ENCODE measurements at regions of chr4 and their contacts with region 1.

Region 1: DNA sequence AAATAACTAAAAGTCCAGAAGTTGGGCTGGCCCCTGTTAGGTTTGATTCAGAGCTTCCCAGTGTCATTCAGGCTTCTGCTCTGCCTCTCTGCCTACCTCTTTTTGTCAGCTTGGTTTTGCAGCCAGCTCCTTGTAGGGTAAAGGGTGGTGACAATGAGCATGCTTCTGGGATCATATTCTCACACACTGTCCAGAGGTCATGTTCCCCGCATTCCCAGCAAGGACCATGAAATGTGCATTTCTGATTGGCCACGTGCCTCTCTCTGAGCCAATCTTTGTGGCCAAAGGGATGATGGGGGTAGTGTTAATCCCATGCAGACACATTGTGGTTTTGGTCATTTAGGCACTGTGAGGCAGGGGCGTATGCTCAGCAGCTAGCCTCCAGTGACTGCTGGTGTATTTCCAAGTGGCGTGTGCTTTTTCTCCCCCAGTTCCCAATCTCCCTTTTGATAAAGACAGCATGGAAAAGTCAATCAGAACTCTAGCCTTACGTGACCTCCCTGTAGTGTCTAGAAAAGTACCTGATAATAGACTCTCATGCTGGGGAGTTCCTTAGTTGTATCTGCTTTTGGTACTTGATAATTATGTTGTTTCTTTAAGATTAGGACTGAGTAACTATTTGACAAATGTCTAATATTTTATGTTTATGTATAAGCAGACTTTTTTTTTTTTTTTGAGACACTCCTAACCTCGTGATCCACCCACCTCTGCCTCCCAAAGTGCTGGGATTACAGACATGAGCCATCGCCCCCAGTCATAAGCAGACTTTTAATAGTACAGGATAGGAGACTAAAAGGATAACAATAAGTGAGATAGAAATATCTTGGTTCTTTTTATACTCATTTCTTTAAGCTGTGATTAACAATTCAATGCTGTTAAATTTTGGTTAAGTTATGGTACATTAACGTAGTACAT is 57.8 kb downstream of the KIAA0232 start:
- DNase-seq: peak; percentile 22 to 43
- H3K4me3 ChIP-seq: no peak overlapping the region
- H3K27ac ChIP-seq: peak overlapping the region; percentile 29
- H3K4me1 ChIP-seq: peaks cover 13% of the 10 kb centered on the region
- H3K27me3 ChIP-seq: no peaks in the 10 kb centered on the region
- CTCF ChIP-seq: no peak

Region 2: DNA sequence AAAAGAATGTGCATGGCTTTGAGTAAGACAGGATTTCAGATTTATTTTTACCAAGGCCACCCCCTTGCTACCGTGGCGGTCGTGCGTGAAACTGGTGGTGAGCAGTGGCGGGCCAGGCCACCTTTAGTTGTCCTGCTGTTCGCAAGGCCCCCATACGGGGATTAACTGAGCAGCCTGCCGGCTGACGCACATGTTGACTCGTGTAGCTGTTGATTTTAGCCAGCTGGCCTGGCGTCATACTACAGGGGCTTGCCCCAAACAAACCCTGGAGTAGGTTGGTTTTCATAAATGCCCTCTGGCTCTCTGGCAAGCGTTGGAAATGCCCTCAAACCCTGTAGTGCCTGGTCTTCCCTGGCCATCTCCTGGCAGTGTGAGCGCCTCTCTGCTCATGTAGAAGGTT is 542.3 kb before region 1 on chr4:
- CTCF ChIA-PET with region 1: no interaction called
- POLR2A ChIA-PET with region 1: no interaction called
- intact Hi-C with region 1: no loop called
- DNase-seq: no peak
- H3K4me3 ChIP-seq: no peak overlapping the region
- H3K27ac ChIP-seq: no peak overlapping the region
- H3K4me1 ChIP-seq: no peaks in the 10 kb centered on the region
- H3K27me3 ChIP-seq: no peaks in the 10 kb centered on the region
- CTCF ChIP-seq: no peak

Region 3: GRCh38 chr4:6668381-6668780 is 171.9 kb before region 1 on chr4:
- CTCF ChIA-PET with region 1: interaction called, 10 read pairs
- POLR2A ChIA-PET with region 1: no interaction called
- intact Hi-C with region 1: no loop called
- DNase-seq: peak; percentile 72 to 93
- H3K4me3 ChIP-seq: peak overlapping the region; percentile 7; the same call in 1 of the 2 replicates
- H3K27ac ChIP-seq: peak overlapping the region; percentile 75
- H3K4me1 ChIP-seq: peaks cover 12% of the 10 kb centered on the region
- H3K27me3 ChIP-seq: no peaks in the 10 kb centered on the region
- CTCF ChIP-seq: no peak

Region 4: DNA sequence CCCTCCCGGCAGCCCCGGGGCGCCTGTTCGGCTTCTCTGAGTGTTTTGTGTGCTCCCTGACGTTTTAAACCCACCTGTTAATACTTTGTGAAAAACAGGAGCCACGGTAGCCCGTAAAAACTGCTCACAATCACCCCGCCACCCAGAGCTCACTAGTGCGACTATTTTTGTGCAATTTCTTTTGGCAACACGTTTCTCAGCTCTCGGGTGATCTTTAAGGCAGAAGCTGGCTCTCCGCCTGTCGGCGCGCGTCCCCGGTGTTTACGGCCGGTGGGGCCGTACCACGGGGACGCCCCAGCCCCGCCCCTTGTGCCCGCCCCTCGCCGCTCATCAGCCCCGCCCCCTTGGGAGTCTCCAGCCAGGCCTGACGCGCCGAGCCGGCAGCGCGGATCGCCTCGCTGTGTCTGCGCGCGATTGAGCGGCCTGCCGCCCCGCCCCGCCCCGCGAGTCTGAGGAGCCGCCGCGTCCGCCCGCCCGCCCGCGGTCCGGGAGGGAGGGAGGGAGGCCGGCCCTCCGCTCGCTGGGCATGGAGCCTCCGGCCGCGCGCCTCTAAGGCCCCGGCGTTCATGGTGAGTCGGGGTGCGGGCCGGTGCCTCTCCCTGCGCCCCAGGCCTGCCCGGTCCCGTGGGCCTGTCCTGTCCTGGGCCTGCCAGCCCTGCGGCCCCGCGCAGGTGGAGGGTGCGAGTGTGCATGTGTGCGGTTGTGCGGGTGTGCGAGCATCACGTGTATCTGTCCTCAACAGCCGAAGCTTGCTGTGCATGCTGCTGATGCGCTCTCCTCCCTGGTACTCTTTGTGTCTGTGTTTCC is 146.7 kb after region 1 on chr4:
- CTCF ChIA-PET with region 1: no interaction called
- POLR2A ChIA-PET with region 1: no interaction called
- intact Hi-C with region 1: no loop called
- DNase-seq: peak; percentile 79 to 96
- H3K4me3 ChIP-seq: peak overlapping the region; percentile 92
- H3K27ac ChIP-seq: peak overlapping the region; percentile 86
- H3K4me1 ChIP-seq: peaks cover 24% of the 10 kb centered on the region
- H3K27me3 ChIP-seq: no peaks in the 10 kb centered on the region
- CTCF ChIP-seq: no peak

Region 5: GRCh38 chr4:7007944-7008343 is 167.6 kb after region 1 on chr4:
- CTCF ChIA-PET with region 1: no interaction called
- POLR2A ChIA-PET with region 1: interaction called, 15 read pairs
- intact Hi-C with region 1: no loop called
- DNase-seq: no peak
- H3K4me3 ChIP-seq: no peak overlapping the region
- H3K27ac ChIP-seq: no peak overlapping the region
- H3K4me1 ChIP-seq: no peaks in the 10 kb centered on the region
- H3K27me3 ChIP-seq: no peaks in the 10 kb centered on the region
- CTCF ChIP-seq: no peak

Region 6: GRCh38 chr4:7151668-7152227 is 311.4 kb after region 1 on chr4:
- CTCF ChIA-PET with region 1: no interaction called
- POLR2A ChIA-PET with region 1: no interaction called
- intact Hi-C with region 1: no loop called
- DNase-seq: peak in 1 of 2 experiments; percentile 14
- H3K4me3 ChIP-seq: no peak overlapping the region
- H3K27ac ChIP-seq: no peak overlapping the region
- H3K4me1 ChIP-seq: no peaks in the 10 kb centered on the region
- H3K27me3 ChIP-seq: peaks cover 23% of the 10 kb centered on the region
- CTCF ChIP-seq: no peak